ENCODE measurements at regions of chr5 and their contacts with region 1.

Region 1: GRCh38 chr5:115634343-115635132 is 8.7 kb upstream of the TMED7 start:
- DNase-seq: no peak
- H3K4me3 ChIP-seq: peak overlapping the region; percentile 29
- H3K27me3 ChIP-seq: no peaks in the 10 kb centered on the region; the same call in 1 of the 2 replicates
- CTCF ChIP-seq: peak; percentile 87

Region 2: DNA sequence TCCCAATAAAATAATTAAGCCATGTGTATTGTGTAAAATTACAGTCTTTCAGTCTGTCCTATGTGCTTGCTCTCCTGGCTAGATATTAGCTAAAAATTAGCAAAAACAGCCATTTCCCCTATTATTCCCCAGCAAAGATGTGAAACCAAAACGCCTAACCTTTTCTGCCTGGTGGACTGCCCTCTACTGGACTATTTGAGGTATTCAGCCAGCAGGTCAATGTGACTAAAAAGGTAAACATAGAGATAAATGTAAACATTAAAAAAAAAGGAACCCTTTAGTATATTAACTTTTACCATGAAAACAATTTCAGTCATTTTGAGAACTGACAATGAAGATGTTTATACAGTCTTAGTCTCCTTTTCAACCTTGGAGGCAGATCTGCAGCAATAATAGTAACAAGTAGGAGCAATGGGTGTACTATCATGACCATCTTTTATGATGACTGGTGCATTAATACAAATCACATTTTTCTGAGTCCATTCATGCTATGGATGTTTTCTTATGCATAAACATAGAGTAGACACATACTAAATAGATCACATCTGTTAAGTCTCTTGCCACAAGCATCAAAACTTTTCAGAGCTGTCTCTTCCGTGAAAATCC is 196.7 kb after region 1 on chr5:
- CTCF ChIA-PET with region 1: interaction called, 15 read pairs
- POLR2A ChIA-PET with region 1: interaction called, 4 read pairs
- DNase-seq: no peak
- H3K4me3 ChIP-seq: no peak overlapping the region
- H3K27me3 ChIP-seq: no peaks in the 10 kb centered on the region
- CTCF ChIP-seq: peak; percentile 77

Region 3: DNA sequence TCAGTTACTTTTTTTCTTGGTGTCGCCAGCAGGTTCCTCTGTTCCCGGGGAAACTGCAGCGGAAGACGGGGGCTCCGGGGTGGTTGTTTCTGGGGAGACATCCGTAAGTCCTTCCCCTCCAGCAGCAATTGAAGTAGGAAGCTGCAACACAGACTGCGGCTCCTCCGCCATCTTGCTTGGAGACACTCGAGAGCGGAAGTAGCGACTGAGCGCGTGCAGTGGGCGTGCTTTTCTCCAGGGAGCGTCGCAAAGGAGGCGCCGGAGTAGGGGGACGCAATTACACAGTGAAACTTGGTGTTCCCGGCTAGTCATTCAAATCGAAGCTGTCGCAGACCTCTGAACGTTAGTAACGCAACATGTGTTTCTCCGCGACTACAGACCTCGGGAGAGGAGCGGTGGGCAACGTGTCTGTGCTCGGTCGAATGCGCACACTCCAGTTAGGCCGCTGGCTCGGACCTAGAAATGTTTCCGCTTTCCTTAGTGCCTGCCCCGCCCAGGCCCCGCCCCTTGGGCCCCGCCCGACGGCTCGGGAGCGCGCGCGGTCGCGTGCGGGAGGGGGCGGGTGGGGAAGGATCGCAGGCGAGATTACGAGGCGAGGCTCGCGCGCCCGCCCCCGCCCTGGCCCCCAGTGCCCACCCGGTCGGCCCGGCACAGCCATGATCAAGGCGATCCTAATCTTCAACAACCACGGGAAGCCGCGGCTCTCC is 207.0 kb after region 1 on chr5 and contains the starts of genes AP3S1 and ATG12:
- CTCF ChIA-PET with region 1: interaction called, 18 read pairs
- POLR2A ChIA-PET with region 1: no interaction called
- DNase-seq: peak; percentile 63
- H3K4me3 ChIP-seq: peak within 1 kb of the TSS; percentile 96
- H3K27me3 ChIP-seq: no peaks in the 10 kb centered on the region
- CTCF ChIP-seq: no peak
- polyA plus RNA-seq, gene AP3S1: 27.6 and 77.0 TPM in 2 replicates
- polyA plus RNA-seq, gene ATG12: 34.6 and 71.1 TPM in 2 replicates

Region 4: GRCh38 chr5:116479776-116480675 is 845.5 kb after region 1 on chr5:
- CTCF ChIA-PET with region 1: no interaction called
- POLR2A ChIA-PET with region 1: no interaction called
- DNase-seq: no peak
- H3K4me3 ChIP-seq: no peak overlapping the region
- H3K27me3 ChIP-seq: no peaks in the 10 kb centered on the region
- CTCF ChIP-seq: no peak

Measured in BJ (cell line).